Heart right ventricle (tissue), 16 donors: ENCODE measurements at regions of chr3 and their contacts with region 1.

Region 1: GRCh38 chr3:158434412-158435038 is 136.5 kb upstream of the MLF1 start:
- DNase-seq: peak in 1 of 2 donors; percentile 55
- ATAC-seq: peak in 7 of 8 donors; percentile 71 to 85 (median 77)
- H3K4me3 ChIP-seq: no peak overlapping the region
- H3K27ac ChIP-seq: no peak overlapping the region
- H3K4me1 ChIP-seq: peaks cover 0 to 4% (median 0%) of the 10 kb centered on the region in 9 donors
- H3K27me3 ChIP-seq: no peaks in the 10 kb centered on the region
- CTCF ChIP-seq: peak; percentile 34 to 87 (median 76)

Region 2: GRCh38 chr3:157532529-157533297 is 901.8 kb before region 1 on chr3:
- intact Hi-C with region 1: loop called in 1 of 10 experiments (anchors 10 kb)
- DNase-seq: peak in 1 of 2 donors; percentile 29
- ATAC-seq: peak; percentile 62 to 90 (median 82)
- H3K4me3 ChIP-seq: no peak overlapping the region
- H3K27ac ChIP-seq: peak overlapping the region in 1 of 10 donors; percentile 61
- H3K4me1 ChIP-seq: peaks cover 0 to 16% (median 0%) of the 10 kb centered on the region in 9 donors
- H3K27me3 ChIP-seq: no peaks in the 10 kb centered on the region
- CTCF ChIP-seq: peak; percentile 34 to 76 (median 71)

Region 3: GRCh38 chr3:157610876-157611535 is 823.5 kb before region 1 on chr3:
- intact Hi-C with region 1: loop called in 8 of 10 experiments (anchors 2 to 10 kb)
- DNase-seq: no peak
- ATAC-seq: no peak
- H3K4me3 ChIP-seq: no peak overlapping the region
- H3K27ac ChIP-seq: no peak overlapping the region
- H3K4me1 ChIP-seq: peaks cover 0 to 7% (median 0%) of the 10 kb centered on the region in 9 donors
- H3K27me3 ChIP-seq: peaks cover 0 to 11% (median 0%) of the 10 kb centered on the region in 7 donors
- CTCF ChIP-seq: no peak

Region 4: GRCh38 chr3:157618075-157618760 is 816.3 kb before region 1 on chr3:
- intact Hi-C with region 1: loop called (anchors 1 to 10 kb)
- DNase-seq: no peak
- ATAC-seq: peak in 5 of 8 donors; percentile 42 to 61 (median 45)
- H3K4me3 ChIP-seq: no peak overlapping the region
- H3K27ac ChIP-seq: no peak overlapping the region
- H3K4me1 ChIP-seq: peaks cover 0 to 8% (median 0%) of the 10 kb centered on the region in 9 donors
- H3K27me3 ChIP-seq: peaks cover 0 to 14% (median 4%) of the 10 kb centered on the region in 7 donors
- CTCF ChIP-seq: peak; percentile 38 to 78 (median 71)

Region 5: DNA sequence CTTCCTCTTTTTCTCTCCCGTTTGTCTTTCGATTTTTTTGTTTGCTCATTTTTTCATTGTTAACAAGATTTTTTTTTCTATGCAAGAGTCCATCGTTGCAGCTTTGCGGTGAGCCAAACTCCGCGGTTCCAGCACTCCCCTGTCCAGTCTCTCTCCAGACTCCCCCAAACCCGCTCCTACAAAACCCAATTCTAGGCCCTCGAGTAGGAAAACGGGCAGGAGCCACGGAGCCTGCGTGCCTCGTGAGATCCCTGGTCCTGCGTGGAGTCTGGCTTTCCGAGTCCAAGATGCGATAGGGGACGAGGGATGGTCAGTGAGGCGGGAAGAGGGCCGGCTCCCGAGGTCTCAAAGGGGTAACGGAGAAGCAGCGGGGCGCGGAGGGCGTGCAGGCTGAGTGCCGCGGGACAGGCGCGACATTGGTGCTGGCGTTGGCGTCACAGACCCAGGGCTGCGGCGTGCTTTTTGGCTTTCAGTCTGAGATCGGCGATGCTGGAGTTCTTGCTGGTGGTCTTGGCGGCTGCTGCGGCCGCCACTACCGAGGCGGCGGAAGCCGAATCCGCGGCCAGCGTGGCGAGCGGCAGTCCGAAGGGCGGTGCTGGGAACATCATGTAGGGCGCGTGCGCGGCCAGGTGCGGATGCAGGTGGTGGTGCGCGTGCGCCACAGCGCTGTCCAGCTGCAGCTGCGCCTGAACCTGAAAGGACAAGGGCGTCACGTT is 336.8 kb before region 1 on chr3:
- intact Hi-C with region 1: loop called in 3 of 10 experiments (anchors 10 kb)
- DNase-seq: peak in 1 of 2 donors; percentile 28
- ATAC-seq: peak in 6 of 8 donors; percentile 25 to 78 (median 58)
- H3K4me3 ChIP-seq: peak overlapping the region; percentile 14 to 58 (median 44)
- H3K27ac ChIP-seq: no peak overlapping the region
- H3K4me1 ChIP-seq: peaks cover 0 to 30% (median 11%) of the 10 kb centered on the region in 9 donors
- H3K27me3 ChIP-seq: peaks cover 45 to 100% (median 100%) of the 10 kb centered on the region in 7 donors
- CTCF ChIP-seq: peak in 1 of 9 donors; percentile 6